A549 (cell line): ENCODE measurements at regions of chrX and their contacts with region 1.

Region 1: GRCh38 chrX:132631579-132632232 is 142.9 kb upstream of the MBNL3 start:
- DNase-seq: peak; percentile 13 to 36
- ATAC-seq: peak; percentile 68 to 84; a peak in 4 of 6 replicates
- H3K4me3 ChIP-seq: no peak overlapping the region
- H3K27ac ChIP-seq: no peak overlapping the region
- H3K4me1 ChIP-seq: no peaks in the 10 kb centered on the region
- CTCF ChIP-seq: peak; percentile 54
- EP300 ChIP-seq: no peak
- POLR2A ChIP-seq: no peak
- RAD21 ChIP-seq: peak; percentile 53 to 58; a peak in 4 of 5 replicates

Region 2: GRCh38 chrX:133670383-133670782 is 1038.7 kb after region 1 on chrX:
- CTCF ChIA-PET with region 1: interaction called, 10 read pairs
- POLR2A ChIA-PET with region 1: no interaction called
- DNase-seq: peak; percentile 28 to 30
- ATAC-seq: peak in 1 of 2 experiments; percentile 54; a peak in 2 of 6 replicates
- H3K4me3 ChIP-seq: no peak overlapping the region
- H3K27ac ChIP-seq: no peak overlapping the region
- H3K4me1 ChIP-seq: no peaks in the 10 kb centered on the region
- CTCF ChIP-seq: peak; percentile 67
- EP300 ChIP-seq: no peak
- POLR2A ChIP-seq: no peak
- RAD21 ChIP-seq: peak; percentile 74 to 80